ENCODE measurements at regions of chr5 and their contacts with region 1.

Region 1: GRCh38 chr5:80487829-80488721 is at the start of gene FAM151B:
- DNase-seq: peak; percentile 89 to 93
- ATAC-seq: peak; percentile 93
- total RNA-seq, gene FAM151B: 1.6 to 1.7 TPM

Region 2: GRCh38 chr5:80591352-80591751 is 103.3 kb after region 1 on chr5:
- intact Hi-C with region 1: no loop called
- DNase-seq: no peak
- ATAC-seq: no peak

Region 3: DNA sequence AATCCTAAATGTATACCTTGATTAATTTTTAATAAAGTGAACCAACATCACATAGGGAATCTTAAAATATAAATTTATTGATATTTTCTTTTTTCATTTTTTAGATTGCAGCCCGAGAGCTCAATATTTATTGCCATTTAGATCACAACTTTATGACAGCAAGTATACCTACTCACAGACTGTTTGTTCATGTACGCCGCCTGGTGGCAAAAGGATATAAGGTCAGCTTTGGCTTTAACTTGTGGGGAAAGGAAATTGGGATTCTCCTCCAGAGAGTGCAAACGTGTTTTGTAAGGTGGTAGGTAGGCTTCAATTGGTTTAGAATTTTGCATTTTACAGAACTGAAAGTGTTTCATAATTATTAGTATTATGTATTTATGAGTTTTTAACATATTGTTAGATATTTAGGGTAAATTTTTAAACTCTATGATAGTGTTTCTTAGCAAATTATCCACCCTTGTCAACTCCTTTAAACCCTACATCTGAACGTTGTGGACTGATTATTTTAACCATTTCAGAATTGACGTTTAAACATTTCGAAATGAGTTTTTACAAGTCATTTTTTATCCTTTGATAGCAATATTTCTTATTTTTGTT is 184.2 kb after region 1 on chr5:
- intact Hi-C with region 1: loop called in 1 of 2 experiments (anchors 5 kb)
- DNase-seq: peak; percentile 64 to 83
- ATAC-seq: peak; percentile 67

Region 4: DNA sequence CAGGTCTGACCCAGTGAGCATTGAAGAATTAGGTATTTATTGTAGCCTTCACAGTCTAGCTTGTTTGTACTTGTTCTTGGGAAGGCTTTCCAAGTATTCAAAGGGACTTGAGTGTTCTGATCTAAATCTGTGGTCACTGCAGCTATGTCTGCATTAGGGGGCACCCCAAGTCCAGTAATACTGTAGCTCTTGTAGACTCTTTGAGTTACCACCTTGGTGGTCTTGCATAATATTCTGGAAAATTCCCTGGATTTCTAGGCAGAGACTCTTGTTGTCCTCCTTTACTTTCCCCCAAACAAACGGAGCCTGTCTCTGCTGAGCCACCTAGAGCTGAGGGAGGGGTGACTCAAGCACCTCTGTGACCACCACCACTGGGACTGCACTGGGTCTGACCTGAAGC is 316.3 kb after region 1 on chr5:
- intact Hi-C with region 1: no loop called
- DNase-seq: no peak
- ATAC-seq: no peak